GM18951 (cell line): ENCODE measurements at regions of chr3 and their contacts with region 1.

Region 1: GRCh38 chr3:14780927-14781507 is 37.7 kb upstream of the FGD5 start:
- POLR2A ChIP-seq: no peak

Region 2: DNA sequence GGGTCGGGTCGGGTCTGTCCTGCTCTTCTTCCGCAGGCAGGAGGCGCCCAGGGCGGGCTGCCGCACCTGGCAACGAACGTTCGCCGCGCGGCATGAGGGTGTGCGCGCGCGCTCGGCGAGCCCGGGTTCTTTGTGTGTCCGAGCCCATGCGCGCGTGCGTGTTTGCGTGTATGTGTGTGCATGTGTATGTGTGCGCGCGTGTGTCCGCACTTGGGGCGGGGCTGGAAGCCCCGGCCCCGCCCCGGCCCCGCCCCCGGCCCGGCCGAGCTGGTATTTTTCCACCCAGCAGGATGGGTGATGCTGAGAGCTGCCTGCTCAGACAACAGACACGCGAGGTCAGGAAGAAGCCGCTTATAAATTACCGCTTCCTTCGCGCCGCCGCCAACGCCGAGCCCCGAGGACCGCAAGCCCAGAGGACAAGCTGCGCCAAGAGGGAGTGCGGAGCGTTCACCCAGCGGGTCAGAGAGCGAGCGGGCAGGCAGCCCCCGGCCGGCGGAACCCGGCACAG is 378.7 kb before region 1 on chr3 and contains the start of gene SLC6A6:
- in situ Hi-C with region 1: no loop called
- POLR2A ChIP-seq: peak; percentile 84

Region 3: GRCh38 chr3:15042936-15043335 is 261.9 kb after region 1 on chr3:
- in situ Hi-C with region 1: loop called (anchors 25 kb)
- POLR2A ChIP-seq: no peak